ENCODE measurements at regions of chr16 and their contacts with region 1.

Region 1: DNA sequence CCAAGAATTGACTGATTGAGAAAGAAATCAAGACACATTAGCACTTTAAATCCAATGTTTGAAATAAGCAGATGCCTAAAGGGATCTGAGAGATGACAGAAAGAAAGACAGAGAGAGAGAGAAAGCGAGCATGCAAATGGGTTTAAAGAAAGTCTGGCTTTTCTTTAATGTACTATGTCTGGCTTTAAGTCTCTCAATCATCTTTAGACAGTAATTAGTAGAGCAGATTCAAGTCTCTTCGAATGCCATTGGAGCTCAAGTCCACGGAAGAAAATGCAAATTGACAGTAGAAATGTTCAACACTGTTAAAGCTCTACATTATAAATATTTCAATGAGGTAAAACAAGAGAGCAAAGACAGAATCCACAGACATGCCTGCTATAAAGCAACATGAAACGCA is 1480.2 kb upstream of the CDH8 start:
- DNase-seq: no peak
- ATAC-seq: no peak
- H3K4me3 ChIP-seq: no peak overlapping the region
- H3K4me3 Mint-ChIP-seq: no peak overlapping the region
- H3K27ac ChIP-seq: no peak overlapping the region
- H3K27ac Mint-ChIP-seq: no peak overlapping the region
- H3K4me1 ChIP-seq: no peaks in the 10 kb centered on the region
- H3K4me1 Mint-ChIP-seq: no peaks in the 10 kb centered on the region
- H3K27me3 ChIP-seq: no peaks in the 10 kb centered on the region
- H3K27me3 Mint-ChIP-seq: no peaks in the 10 kb centered on the region
- CTCF ChIP-seq: no peak

Region 2: DNA sequence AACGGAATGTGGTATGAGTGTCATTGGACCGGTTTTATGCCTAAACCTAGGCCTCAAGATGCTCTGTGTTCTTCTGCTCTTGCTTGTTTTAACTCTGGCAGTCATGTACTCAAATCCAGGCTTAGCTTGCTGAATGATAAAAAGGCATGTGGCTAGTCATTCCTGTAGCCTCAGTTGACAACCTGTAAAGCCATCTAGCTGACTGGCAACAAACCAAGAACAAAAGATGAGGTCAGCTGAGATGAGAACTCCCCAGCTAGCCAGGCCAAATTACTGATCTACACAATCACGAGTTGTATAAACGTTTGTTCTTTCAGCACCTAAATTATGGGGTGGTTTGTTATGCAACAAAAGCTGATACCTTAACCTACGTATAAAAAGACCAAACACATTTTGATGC is 74.1 kb before region 1 on chr16:
- CTCF ChIA-PET with region 1: no interaction called
- POLR2A ChIA-PET with region 1: no interaction called
- intact Hi-C with region 1: no loop called
- DNase-seq: no peak
- ATAC-seq: no peak
- H3K4me3 ChIP-seq: no peak overlapping the region
- H3K4me3 Mint-ChIP-seq: no peak overlapping the region
- H3K27ac ChIP-seq: no peak overlapping the region
- H3K27ac Mint-ChIP-seq: no peak overlapping the region
- H3K4me1 ChIP-seq: no peaks in the 10 kb centered on the region
- H3K4me1 Mint-ChIP-seq: no peaks in the 10 kb centered on the region
- H3K27me3 ChIP-seq: no peaks in the 10 kb centered on the region
- H3K27me3 Mint-ChIP-seq: no peaks in the 10 kb centered on the region
- CTCF ChIP-seq: no peak

Region 3: GRCh38 chr16:63481060-63481459 is 35.3 kb before region 1 on chr16:
- CTCF ChIA-PET with region 1: no interaction called
- POLR2A ChIA-PET with region 1: interaction called, 10 read pairs
- intact Hi-C with region 1: no loop called
- DNase-seq: no peak
- ATAC-seq: no peak
- H3K4me3 ChIP-seq: no peak overlapping the region
- H3K4me3 Mint-ChIP-seq: no peak overlapping the region
- H3K27ac ChIP-seq: no peak overlapping the region
- H3K27ac Mint-ChIP-seq: no peak overlapping the region
- H3K4me1 ChIP-seq: no peaks in the 10 kb centered on the region
- H3K4me1 Mint-ChIP-seq: no peaks in the 10 kb centered on the region
- H3K27me3 ChIP-seq: no peaks in the 10 kb centered on the region
- H3K27me3 Mint-ChIP-seq: no peaks in the 10 kb centered on the region
- CTCF ChIP-seq: no peak

Measured in CD8-positive, alpha-beta T cell (primary cell).